ENCODE measurements at regions of chr10 and their contacts with region 1.

Region 1: DNA sequence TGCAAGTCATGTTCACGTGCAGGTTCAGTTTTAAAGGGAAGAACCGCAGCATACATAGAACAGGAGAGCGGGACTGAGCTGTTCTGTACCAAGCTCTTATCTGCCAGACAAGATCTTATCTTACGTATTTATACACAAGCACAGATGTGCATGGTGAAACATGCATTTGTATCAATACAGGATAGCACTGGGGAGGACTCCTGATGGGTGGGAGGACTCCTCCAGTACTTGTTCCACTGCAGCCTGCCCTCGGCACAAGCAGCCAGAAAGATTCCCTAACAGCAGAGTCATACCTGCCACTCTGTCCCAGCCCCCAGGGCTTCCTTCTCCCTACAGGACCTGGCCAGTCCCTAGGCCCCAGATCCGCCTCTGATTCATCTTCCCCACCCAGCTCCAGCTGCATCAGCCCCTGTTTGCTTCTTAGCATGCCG is 13.2 kb upstream of the PRKCQ start:
- DNase-seq: no peak
- H3K4me3 Mint-ChIP-seq: peak overlapping the region; percentile 34
- H3K27ac Mint-ChIP-seq: peak overlapping the region; percentile 93
- H3K4me1 Mint-ChIP-seq: peaks cover 95% of the 10 kb centered on the region
- H3K27me3 Mint-ChIP-seq: no peaks in the 10 kb centered on the region

Region 2: GRCh38 chr10:6647811-6648526 is 54.7 kb after region 1 on chr10:
- intact Hi-C with region 1: loop called (anchors 1 kb)
- DNase-seq: peak; percentile 58
- H3K4me3 Mint-ChIP-seq: no peak overlapping the region
- H3K27ac Mint-ChIP-seq: no peak overlapping the region
- H3K4me1 Mint-ChIP-seq: peaks cover 51% of the 10 kb centered on the region
- H3K27me3 Mint-ChIP-seq: no peaks in the 10 kb centered on the region

Measured in activated T-helper 1 cell treated with anti-CD3 and anti-CD28 coated beads, Interleukin-12 subunit alpha, Interleukin-12 subunit beta, Interleukin-2, Interleukin-4 antibody, amounts not matched to agents 30 ng/mL and 10 ng/mL and 1 ng/mL, durations not matched to agents 14 hours and 24 hours and 36 hours (primary cell).